PC-9 (cell line): ENCODE measurements at regions of chr1 and their contacts with region 1.

Region 1: GRCh38 chr1:214213136-214213535 is 67.8 kb upstream of the SMYD2 start:
- DNase-seq: peak; percentile 18 to 87
- H3K4me3 ChIP-seq: no peak overlapping the region
- H3K27ac ChIP-seq: peak overlapping the region; percentile 15; the same call in 1 of the 2 replicates
- H3K4me1 ChIP-seq: peaks cover 56% of the 10 kb centered on the region
- H3K27me3 ChIP-seq: no peaks in the 10 kb centered on the region
- CTCF ChIP-seq: no peak

Region 2: DNA sequence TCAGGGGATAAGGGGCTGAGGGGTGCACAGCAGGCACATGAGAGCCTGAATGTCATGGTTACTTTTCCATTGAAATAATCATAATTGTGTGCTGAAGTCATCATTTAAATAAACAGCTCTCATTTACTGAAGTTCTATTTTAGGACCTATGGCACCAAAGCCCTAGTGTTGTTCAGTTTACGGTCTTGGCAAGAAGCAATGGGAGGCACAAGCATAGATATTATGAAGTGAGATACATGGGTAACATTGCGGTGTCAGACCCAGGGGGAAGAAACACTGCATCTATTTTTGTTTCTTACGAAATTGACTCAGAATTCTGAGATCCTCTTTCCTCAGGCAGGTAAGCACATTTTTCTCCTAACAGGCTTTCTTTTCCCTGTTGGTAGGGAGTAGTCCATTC is 663.2 kb before region 1 on chr1:
- CTCF ChIA-PET with region 1: no interaction called
- POLR2A ChIA-PET with region 1: no interaction called
- intact Hi-C with region 1: no loop called
- DNase-seq: no peak
- H3K4me3 ChIP-seq: no peak overlapping the region
- H3K27ac ChIP-seq: no peak overlapping the region
- H3K4me1 ChIP-seq: no peaks in the 10 kb centered on the region
- H3K27me3 ChIP-seq: no peaks in the 10 kb centered on the region
- CTCF ChIP-seq: no peak

Region 3: DNA sequence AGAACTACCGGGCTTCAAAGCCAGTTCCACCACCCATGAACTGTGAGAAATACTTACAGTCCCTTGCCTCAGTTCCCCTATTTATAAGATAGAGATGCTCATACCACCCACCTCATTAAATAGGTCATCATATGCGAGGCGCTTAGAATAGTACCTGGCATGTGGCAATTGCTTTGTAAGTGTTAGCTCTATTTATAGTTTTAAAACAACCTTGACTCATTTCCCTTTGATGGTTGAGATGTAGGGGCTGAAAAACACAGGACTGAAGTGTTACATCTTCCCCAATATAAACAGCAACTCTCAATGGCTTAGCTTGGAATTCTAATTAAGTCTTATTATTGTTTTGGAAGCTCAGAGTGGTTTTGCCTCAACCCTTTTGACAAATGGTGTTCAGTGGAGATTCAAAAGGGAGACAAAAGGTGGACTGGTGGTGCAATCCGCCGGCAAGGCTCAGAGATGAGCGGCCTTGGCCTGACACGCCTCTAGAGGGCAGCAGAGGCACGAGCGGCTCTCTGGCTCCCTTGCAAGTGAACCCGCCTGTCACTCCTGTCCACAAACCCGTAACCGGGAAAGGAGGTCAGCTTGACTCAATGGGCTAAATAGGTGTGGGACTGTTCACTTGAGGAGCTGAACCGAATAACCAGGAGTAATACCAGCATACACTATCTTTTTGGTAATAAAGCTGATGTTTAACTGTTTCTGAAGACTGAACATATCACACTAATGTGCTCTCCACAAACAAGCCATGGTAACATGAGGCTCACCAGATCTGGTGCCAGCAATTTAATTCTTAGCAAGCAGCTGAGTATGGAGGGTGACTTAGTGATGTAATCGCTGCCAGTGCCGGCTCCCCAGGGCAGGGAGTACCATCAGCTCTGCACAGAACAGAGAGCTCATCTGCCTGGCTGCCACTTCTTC is 48.3 kb after region 1 on chr1:
- CTCF ChIA-PET with region 1: interaction called, 7 read pairs
- POLR2A ChIA-PET with region 1: no interaction called
- intact Hi-C with region 1: loop called (anchors 2 kb)
- DNase-seq: peak; percentile 51 to 80
- H3K4me3 ChIP-seq: no peak overlapping the region; the same call in 1 of the 2 replicates
- H3K27ac ChIP-seq: no peak overlapping the region
- H3K4me1 ChIP-seq: peaks cover 30% of the 10 kb centered on the region
- H3K27me3 ChIP-seq: no peaks in the 10 kb centered on the region
- CTCF ChIP-seq: peak; percentile 87

Region 4: DNA sequence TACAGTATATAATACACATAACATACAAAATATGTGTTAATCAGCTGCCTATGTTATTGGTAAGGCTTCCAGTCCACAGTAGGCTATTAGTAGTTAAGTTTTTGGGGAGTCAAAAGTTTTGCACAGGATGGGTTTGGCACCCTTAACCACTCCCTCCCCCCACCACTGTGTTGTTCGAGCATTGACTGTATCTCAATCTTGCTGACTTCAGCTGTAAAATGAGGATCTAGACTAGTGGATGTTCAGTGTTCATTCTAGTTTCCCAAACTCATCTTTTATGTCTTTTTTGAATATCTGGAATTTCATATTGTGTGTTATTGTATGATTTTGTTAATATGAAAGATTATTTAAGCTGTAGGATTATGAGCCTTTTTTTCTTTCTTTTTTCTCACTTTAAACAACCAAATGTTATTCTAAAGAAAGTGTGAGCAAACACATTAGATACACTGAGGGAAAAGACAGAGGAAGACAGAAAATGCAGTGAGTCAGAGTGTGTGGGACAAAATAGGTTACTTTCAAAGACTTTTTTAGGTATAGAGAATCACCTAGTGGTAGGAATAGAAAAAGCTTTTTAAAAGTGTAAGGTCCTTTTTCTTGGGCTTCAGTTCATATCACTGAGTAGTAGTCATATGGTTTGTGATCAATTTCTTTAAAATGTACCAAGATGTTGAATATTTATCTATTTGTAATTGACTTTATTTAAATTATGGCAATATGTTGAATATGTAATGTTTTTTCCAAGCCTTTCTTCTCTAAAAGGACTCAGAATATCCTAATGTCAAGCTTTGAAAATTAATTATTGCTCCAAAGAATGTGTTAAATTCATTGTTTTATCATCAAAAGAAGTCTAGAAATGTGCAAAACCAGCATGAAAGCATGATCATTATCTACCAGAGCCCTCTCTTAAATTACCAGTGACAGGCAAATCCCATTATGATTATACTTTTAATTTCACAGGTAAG is 371.9 kb after region 1 on chr1:
- CTCF ChIA-PET with region 1: interaction called, 6 read pairs
- POLR2A ChIA-PET with region 1: no interaction called
- intact Hi-C with region 1: loop called (anchors 5 kb)
- DNase-seq: peak in 1 of 2 experiments; percentile 73
- H3K4me3 ChIP-seq: no peak overlapping the region
- H3K27ac ChIP-seq: no peak overlapping the region
- H3K4me1 ChIP-seq: peaks cover 30% of the 10 kb centered on the region
- H3K27me3 ChIP-seq: no peaks in the 10 kb centered on the region
- CTCF ChIP-seq: peak; percentile 86

Region 5: DNA sequence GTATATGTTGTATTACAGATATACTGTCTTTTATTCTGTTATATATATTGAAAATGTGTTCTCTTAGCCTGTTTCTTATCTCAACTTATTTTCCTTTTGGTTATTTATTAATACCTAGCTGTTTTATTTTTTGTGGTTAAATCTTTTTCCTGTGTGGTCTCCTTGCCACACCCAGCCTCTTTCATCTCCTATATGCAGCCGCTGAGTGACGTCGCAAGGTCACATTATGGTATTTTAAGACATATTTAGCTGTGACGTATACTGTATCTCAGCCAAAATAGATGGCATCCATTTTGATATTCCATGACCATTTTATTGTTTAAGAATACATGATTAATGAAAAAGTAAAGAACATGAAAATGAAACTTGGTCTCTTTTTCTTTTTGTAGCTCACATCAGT is 419.0 kb after region 1 on chr1:
- CTCF ChIA-PET with region 1: interaction called, 14 read pairs
- POLR2A ChIA-PET with region 1: no interaction called
- intact Hi-C with region 1: loop called (anchors 2 kb)
- DNase-seq: no peak
- H3K4me3 ChIP-seq: no peak overlapping the region
- H3K27ac ChIP-seq: no peak overlapping the region
- H3K4me1 ChIP-seq: no peaks in the 10 kb centered on the region
- H3K27me3 ChIP-seq: no peaks in the 10 kb centered on the region
- CTCF ChIP-seq: no peak

Region 6: DNA sequence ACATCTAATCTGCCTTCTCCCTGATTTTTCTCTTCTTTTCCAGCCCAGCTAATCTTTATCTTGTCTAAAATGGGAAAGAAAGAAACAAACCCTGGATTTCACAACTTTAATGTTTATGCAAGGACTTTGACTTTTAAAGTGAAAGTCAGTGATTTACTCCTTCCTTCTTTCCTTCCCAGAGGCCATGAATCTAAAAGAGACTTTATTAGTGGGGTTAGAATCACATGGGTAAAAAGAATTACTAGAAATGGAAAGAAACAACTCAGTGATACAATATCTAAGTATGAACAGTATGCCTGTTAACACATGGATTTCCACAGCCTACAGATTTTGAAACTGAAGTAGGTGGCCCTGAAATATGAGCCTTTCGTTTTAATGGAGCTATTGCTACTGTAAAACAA is 809.6 kb after region 1 on chr1:
- CTCF ChIA-PET with region 1: interaction called, 14 read pairs
- POLR2A ChIA-PET with region 1: no interaction called
- intact Hi-C with region 1: no loop called
- DNase-seq: no peak
- H3K4me3 ChIP-seq: no peak overlapping the region
- H3K27ac ChIP-seq: no peak overlapping the region
- H3K4me1 ChIP-seq: no peaks in the 10 kb centered on the region
- H3K27me3 ChIP-seq: no peaks in the 10 kb centered on the region
- CTCF ChIP-seq: no peak

Region 7: DNA sequence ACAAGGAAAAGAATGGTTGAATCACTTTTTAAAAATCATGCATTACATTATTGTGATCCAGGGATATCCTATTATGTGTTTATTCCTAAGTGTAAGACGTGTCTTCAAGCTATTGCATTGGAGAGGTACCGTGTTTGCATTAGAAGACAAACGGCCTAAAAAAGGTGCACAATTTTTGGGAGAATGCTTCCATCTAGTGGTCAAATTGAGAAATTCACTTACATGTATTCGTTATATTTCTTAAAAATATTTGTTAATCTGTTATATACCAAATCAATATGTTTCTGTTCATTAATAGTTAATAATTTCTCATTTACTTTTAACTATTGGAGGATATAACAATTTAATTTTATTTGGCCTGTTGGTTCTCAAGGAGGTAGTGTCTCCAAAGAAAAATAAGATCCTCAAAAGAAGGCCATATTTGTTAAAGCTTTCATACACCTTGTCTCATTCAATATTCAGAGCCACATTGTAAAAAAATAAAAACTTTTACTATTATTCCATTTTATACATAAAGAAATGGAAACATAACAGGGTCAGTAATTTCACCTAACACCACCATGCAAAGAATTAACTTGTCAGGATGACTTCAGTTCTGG is 1313.5 kb after region 1 on chr1:
- CTCF ChIA-PET with region 1: no interaction called
- POLR2A ChIA-PET with region 1: no interaction called
- intact Hi-C with region 1: loop called (anchors 5 kb)
- DNase-seq: no peak
- H3K4me3 ChIP-seq: no peak overlapping the region
- H3K27ac ChIP-seq: no peak overlapping the region
- H3K4me1 ChIP-seq: no peaks in the 10 kb centered on the region
- H3K27me3 ChIP-seq: no peaks in the 10 kb centered on the region
- CTCF ChIP-seq: peak; percentile 90